OCI-LY7 (cell line): ENCODE measurements at regions of chr10 and their contacts with region 1.

Region 1: DNA sequence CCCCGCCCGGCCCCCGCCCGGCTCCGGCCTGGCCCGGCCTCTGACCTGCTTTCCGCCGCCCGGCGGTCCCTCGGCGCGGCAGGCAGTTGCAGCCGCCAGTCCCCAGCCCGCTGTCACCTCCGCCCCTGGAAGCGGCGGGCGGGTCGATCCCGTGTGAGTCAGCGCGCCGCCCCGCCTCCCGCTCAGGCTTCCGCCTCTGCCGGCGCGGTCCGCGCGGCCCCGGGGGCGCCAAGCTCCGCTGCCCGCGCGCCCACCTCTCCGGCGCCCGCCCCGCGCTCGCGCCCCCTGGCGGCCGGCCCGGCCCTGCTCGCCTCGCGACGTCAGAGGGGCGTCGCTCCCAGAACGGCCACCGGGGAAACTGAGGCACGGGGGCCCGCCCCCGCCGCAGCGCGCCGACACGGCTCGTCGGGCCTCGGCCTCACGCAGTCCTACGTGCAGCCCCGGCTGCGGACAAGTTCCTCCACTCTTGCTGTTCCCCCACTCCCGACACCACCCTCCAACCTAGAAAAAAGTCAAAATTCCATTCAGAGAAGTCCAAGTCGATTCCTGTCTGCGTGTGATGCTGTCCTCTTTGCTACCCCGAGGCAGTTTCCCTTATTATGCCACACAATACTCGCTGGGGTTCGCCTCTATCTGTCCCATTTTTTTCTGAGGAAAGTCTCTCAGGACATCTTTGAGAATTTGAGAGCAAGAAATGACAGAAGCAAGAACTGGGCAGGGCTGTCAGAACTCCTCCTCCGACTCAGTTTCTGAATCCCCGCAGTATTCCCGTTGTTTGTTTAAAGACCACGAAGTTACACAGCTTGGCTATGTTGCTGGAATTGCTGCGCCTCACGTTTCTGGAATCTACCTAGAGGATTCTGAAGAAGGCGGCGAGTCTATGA is at the start of gene DNMBP:
- DNase-seq: peak; percentile 94
- H3K4me3 ChIP-seq: peak within 1 kb of the TSS; percentile 89
- H3K27ac ChIP-seq: peak within 1 kb of the TSS; percentile 70
- H3K4me1 ChIP-seq: peaks cover 72% of the 10 kb centered on the region
- CTCF ChIP-seq: peak; percentile 67
- total RNA-seq, gene DNMBP: 24.2 and 27.0 TPM in 2 replicates

Region 2: GRCh38 chr10:99732033-99732912 is 277.8 kb before region 1 on chr10 and contains the starts of genes COX15 and CUTC:
- CTCF ChIA-PET with region 1: no interaction called
- POLR2A ChIA-PET with region 1: interaction called, 4 read pairs
- intact Hi-C with region 1: loop called (anchors 5 kb)
- DNase-seq: peak; percentile 96
- H3K4me3 ChIP-seq: peak within 1 kb of the TSS; percentile 78
- H3K27ac ChIP-seq: peak within 1 kb of the TSS; percentile 74
- H3K4me1 ChIP-seq: peaks cover 18% of the 10 kb centered on the region
- CTCF ChIP-seq: peak; percentile 68
- total RNA-seq, gene COX15: 18.5 and 19.6 TPM in 2 replicates
- total RNA-seq, gene CUTC: 29.9 and 37.1 TPM in 2 replicates

Region 3: GRCh38 chr10:99854860-99855259 is 155.2 kb before region 1 on chr10:
- CTCF ChIA-PET with region 1: no interaction called
- POLR2A ChIA-PET with region 1: no interaction called
- intact Hi-C with region 1: no loop called
- DNase-seq: peak; percentile 20
- H3K4me3 ChIP-seq: no peak overlapping the region
- H3K27ac ChIP-seq: no peak overlapping the region
- H3K4me1 ChIP-seq: no peaks in the 10 kb centered on the region
- CTCF ChIP-seq: peak; percentile 57; the same call in 1 of the 2 replicates

Region 4: GRCh38 chr10:99880080-99880835 is 129.8 kb before region 1 on chr10:
- CTCF ChIA-PET with region 1: no interaction called
- POLR2A ChIA-PET with region 1: no interaction called
- intact Hi-C with region 1: no loop called
- DNase-seq: no peak
- H3K4me3 ChIP-seq: no peak overlapping the region
- H3K27ac ChIP-seq: no peak overlapping the region
- H3K4me1 ChIP-seq: no peaks in the 10 kb centered on the region
- CTCF ChIP-seq: no peak

Region 5: DNA sequence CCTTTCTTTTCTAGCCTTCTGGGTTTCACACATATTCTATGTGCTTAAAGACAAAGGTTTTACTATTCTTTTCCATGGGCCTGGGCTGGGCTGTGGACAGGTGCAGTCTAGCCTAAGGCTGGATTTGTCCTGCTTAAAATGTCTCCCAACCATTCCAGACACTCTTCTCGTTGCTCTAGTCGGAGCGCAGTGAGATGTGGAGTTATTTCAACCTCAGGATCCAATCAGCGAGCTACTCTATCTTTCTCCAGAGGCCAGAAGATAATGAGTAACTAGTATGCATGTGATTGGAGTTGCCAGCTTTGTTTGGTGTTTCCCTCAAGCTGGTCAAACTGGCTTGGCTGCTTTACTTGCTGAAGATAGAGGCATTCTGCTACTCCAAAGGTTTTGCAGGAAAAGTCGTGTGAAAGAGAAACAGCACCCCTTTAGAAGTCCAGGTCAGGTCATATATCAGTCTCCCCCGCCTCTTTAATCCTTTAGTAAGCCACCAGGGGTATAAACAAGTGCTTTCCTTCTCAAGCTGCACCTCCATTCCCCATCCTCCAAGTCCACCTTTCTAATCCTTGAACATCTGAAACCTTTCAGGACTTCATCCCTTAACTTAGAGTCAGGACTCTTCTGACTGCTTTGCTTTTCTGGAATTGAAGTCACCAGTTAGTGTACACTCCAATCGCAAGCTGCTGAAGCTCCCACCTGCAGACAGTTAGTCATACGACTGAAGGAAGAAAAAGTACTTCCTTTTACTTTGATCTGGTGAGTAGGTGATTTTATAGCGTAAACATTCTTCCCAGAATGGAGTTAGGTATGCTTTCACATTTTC is 79.1 kb before region 1 on chr10:
- CTCF ChIA-PET with region 1: no interaction called
- POLR2A ChIA-PET with region 1: no interaction called
- intact Hi-C with region 1: no loop called
- DNase-seq: no peak
- H3K4me3 ChIP-seq: no peak overlapping the region
- H3K27ac ChIP-seq: no peak overlapping the region
- H3K4me1 ChIP-seq: peaks cover 14% of the 10 kb centered on the region
- CTCF ChIP-seq: no peak

Region 6: GRCh38 chr10:99976886-99977665 is 33.0 kb before region 1 on chr10:
- CTCF ChIA-PET with region 1: interaction called, 3 read pairs
- POLR2A ChIA-PET with region 1: interaction called, 13 read pairs
- intact Hi-C with region 1: loop called (anchors 2 kb)
- DNase-seq: no peak
- H3K4me3 ChIP-seq: no peak overlapping the region
- H3K27ac ChIP-seq: no peak overlapping the region
- H3K4me1 ChIP-seq: peaks cover 67% of the 10 kb centered on the region
- CTCF ChIP-seq: no peak

Region 7: DNA sequence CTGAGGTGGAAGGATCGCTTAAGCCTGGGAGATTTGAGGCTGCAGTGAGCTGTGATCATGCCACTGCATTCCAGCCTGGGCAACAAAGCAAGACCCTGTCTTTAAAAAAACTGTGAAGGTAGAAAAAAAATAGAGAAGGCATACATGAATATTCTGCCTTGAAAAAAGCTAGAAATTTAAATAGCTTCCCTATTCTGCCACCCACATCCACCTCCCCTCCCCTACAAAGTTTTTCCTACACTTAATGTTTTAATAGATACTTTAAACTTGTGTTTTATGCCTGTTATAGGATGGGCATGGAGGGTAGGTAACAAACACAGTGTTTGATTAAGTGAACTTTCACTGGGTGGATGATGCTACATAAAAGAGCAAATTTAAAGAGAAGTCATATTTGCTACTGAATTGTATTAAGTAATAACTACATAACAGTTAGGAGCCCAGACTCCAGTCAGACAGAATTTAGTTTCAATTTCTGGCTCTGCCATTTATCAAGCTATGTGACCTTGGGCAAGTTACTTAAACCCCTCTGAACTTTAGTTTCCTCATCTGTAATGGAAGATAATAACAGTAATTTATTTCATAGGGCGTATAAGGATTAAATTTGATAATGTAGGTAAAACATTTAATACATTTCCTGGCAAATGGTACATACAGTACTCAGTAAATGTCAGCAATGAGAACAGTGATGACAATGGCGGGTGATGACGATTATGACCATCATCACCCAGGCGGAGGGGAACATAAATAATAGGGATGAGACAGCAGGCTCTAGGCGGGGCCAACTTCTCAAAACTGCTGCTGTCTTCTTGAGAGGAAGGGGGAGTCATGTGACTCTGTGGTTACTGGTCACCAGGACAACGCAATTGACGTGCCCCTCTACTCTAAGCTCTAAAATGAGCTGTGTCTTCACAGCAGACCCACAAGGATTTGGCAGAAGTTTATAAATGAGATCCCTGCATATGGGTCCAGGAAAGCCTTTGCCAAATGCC is 16.0 kb before region 1 on chr10:
- CTCF ChIA-PET with region 1: interaction called, 3 read pairs
- POLR2A ChIA-PET with region 1: interaction called, 20 read pairs
- intact Hi-C with region 1: no loop called
- DNase-seq: peak; percentile 66
- H3K4me3 ChIP-seq: peak overlapping the region; percentile 12
- H3K27ac ChIP-seq: no peak overlapping the region
- H3K4me1 ChIP-seq: peaks cover 33% of the 10 kb centered on the region
- CTCF ChIP-seq: no peak

Region 8: DNA sequence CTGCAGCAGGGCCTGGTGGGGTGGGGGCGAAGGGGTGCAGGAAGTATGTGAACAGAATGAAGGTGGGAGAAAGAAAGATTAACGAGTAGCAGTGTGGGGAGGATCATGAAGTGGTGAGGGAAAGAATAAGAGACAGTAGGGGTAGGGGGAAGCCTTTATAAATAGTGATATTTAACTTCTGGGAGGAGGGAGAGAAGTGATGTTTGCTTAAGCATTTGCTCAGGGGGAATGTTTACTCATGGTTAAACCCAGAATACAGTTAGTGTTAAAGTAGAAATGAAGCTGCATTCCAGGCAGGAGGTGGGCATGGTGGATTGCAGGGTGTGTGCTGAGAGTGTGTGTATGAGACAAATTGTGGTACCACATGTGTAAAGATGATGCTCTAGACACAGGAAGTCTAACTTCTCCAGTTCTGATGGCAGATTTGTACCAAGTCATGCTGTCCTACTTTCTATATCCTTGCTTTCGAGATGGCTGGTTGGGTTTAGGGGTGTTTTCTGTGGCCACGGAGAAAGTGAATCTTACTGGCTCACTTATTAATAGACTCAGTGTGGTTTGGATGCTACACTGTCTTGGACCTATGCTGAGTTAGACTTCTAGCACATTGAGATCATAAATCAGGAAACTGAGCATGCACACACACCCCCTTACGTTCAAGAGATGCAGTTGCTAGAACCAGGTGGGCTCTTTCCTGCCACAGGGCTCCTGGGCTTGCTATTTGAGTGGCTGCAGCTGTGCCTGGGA is 10.3 kb after region 1 on chr10:
- CTCF ChIA-PET with region 1: interaction called, 5 read pairs
- POLR2A ChIA-PET with region 1: interaction called, 17 read pairs
- intact Hi-C with region 1: no loop called
- DNase-seq: peak; percentile 94
- H3K4me3 ChIP-seq: peak overlapping the region; percentile 54
- H3K27ac ChIP-seq: peak overlapping the region; percentile 95
- H3K4me1 ChIP-seq: peaks cover 74% of the 10 kb centered on the region
- CTCF ChIP-seq: peak; percentile 64

Region 9: DNA sequence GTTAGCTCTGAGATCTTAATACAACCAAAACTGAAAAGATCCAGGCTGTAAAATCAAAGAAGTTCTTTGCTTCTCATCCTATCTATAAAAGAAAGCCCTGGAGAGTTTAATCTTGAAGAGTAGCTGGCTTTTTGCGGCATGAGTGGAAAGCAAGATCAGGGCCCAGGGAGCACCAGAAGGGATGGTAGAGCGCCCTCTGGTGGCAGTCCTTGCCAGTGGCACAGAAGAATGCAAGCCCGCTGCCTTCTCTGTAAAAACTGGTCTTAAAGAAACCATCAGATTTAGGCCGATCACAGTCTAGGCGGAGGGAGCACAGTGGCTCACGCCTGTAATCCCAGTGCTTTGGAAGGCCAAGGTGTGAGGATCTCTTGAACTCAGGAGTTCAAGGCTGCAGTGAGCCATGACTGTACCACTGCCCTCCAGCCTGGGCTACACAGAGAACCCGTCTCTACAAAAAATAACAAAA is 36.0 kb after region 1 on chr10:
- CTCF ChIA-PET with region 1: interaction called, 15 read pairs
- POLR2A ChIA-PET with region 1: interaction called, 9 read pairs
- intact Hi-C with region 1: loop called (anchors 1 kb)
- DNase-seq: peak; percentile 92
- H3K4me3 ChIP-seq: no peak overlapping the region
- H3K27ac ChIP-seq: no peak overlapping the region
- H3K4me1 ChIP-seq: peaks cover 49% of the 10 kb centered on the region
- CTCF ChIP-seq: peak; percentile 97

Region 10: GRCh38 chr10:100245484-100246220 is 235.6 kb after region 1 on chr10:
- CTCF ChIA-PET with region 1: no interaction called
- POLR2A ChIA-PET with region 1: no interaction called
- intact Hi-C with region 1: no loop called
- DNase-seq: no peak
- H3K4me3 ChIP-seq: no peak overlapping the region
- H3K27ac ChIP-seq: no peak overlapping the region
- H3K4me1 ChIP-seq: no peaks in the 10 kb centered on the region
- CTCF ChIP-seq: no peak

Region 11: GRCh38 chr10:100373298-100374136 is 363.5 kb after region 1 on chr10:
- CTCF ChIA-PET with region 1: no interaction called
- POLR2A ChIA-PET with region 1: no interaction called
- intact Hi-C with region 1: loop called (anchors 5 kb)
- DNase-seq: peak; percentile 89
- H3K4me3 ChIP-seq: peak overlapping the region; percentile 73
- H3K27ac ChIP-seq: peak overlapping the region; percentile 71
- H3K4me1 ChIP-seq: peaks cover 58% of the 10 kb centered on the region
- CTCF ChIP-seq: no peak